AG04450 (cell line): ENCODE measurements at regions of chr12 and their contacts with region 1.

Region 1: GRCh38 chr12:62793256-62794217 is 141.4 kb downstream of the PPM1H start:
- DNase-seq: peak; percentile 66
- H3K4me3 ChIP-seq: no peak overlapping the region
- H3K27ac ChIP-seq: no peak overlapping the region
- H3K27me3 ChIP-seq: no peaks in the 10 kb centered on the region
- CTCF ChIP-seq: peak; percentile 96

Region 2: DNA sequence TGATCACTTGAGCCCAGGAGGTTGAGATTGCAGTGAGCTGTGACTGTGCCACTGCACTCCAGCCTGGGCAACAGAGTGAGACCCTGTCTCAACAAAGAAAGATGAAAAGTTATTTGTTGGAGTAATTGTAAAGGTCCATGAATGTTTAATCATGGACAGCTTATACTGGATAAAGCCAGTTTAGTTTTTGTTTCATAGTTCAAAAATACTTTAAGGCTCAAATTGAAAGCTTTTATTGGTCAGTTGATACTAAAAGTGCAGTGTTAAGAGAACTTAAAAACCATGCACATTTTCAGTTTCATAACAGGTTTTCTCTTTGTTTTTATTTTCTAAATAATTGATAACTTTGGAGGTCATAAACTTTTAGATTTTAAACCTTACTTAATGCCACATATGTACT is 218.5 kb before region 1 on chr12:
- CTCF ChIA-PET with region 1: interaction called, 347 read pairs
- POLR2A ChIA-PET with region 1: no interaction called
- DNase-seq: no peak
- H3K4me3 ChIP-seq: no peak overlapping the region
- H3K27ac ChIP-seq: no peak overlapping the region
- H3K27me3 ChIP-seq: no peaks in the 10 kb centered on the region
- CTCF ChIP-seq: no peak

Region 3: DNA sequence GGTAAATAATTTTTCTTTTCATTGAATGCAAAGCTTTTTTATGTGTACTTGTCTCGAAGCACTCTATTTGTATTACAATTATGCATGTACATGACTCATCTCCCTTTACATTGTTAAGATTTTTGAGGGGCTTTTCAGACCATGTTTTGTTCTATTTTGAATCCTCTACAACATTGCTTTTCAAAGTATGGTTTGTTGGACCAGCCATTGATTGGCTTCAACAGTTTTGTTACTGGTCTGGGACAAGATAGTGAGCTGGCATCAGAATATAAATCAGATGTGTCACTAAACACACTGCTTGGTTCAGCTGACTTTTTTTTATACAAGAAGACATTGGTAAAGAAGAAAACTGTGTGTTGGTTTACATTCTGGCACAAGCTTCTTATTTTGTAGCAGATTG is 204.6 kb before region 1 on chr12:
- CTCF ChIA-PET with region 1: interaction called, 347 read pairs
- POLR2A ChIA-PET with region 1: no interaction called
- DNase-seq: peak; percentile 4
- H3K4me3 ChIP-seq: no peak overlapping the region
- H3K27ac ChIP-seq: no peak overlapping the region
- H3K27me3 ChIP-seq: no peaks in the 10 kb centered on the region
- CTCF ChIP-seq: no peak

Region 4: DNA sequence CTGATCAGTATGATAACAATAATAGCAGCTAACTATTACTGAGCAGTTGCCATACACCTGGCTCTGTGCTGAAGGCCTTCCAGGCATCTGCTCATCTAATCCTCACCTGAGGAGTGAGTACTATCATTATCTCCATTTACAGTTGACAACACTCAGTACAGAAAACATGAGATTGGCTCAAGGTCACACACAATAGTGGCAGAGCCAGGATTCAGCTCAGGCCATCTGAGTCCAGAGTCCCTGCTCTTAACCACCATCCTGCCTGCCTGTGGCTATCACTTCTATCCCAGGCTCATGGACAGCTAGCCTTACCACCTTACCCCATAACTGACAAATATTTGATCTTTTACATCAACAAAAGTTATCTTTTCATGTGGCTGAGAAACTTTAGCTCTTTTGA is 14.0 kb before region 1 on chr12:
- CTCF ChIA-PET with region 1: interaction called, 12 read pairs
- POLR2A ChIA-PET with region 1: no interaction called
- DNase-seq: no peak
- H3K4me3 ChIP-seq: no peak overlapping the region
- H3K27ac ChIP-seq: no peak overlapping the region
- H3K27me3 ChIP-seq: no peaks in the 10 kb centered on the region
- CTCF ChIP-seq: no peak

Region 5: DNA sequence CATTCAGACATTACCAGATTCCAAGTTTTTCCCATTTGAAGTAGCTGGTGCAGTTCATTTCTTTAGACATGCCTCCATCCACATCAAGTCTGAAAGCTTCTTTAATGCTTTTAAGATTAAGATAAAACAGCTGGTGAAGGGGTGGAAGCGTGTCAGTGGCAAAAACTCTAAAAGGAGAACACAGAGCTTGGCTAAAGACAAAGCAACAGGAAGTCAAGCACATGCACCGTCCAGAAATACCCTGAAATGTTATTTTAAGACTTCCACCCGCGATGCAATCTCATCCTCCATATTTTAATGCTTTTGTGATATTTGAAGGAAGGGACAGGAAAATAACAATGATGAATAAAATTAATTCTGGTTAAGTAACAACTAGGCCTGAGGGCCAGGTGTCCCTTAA is 109.6 kb after region 1 on chr12:
- CTCF ChIA-PET with region 1: no interaction called
- POLR2A ChIA-PET with region 1: no interaction called
- DNase-seq: no peak
- H3K4me3 ChIP-seq: no peak overlapping the region
- H3K27ac ChIP-seq: no peak overlapping the region
- H3K27me3 ChIP-seq: peaks cover 5% of the 10 kb centered on the region
- CTCF ChIP-seq: no peak